Heart left ventricle (tissue), 16 donors: ENCODE measurements at regions of chr9 and their contacts with region 1.

Region 1: DNA sequence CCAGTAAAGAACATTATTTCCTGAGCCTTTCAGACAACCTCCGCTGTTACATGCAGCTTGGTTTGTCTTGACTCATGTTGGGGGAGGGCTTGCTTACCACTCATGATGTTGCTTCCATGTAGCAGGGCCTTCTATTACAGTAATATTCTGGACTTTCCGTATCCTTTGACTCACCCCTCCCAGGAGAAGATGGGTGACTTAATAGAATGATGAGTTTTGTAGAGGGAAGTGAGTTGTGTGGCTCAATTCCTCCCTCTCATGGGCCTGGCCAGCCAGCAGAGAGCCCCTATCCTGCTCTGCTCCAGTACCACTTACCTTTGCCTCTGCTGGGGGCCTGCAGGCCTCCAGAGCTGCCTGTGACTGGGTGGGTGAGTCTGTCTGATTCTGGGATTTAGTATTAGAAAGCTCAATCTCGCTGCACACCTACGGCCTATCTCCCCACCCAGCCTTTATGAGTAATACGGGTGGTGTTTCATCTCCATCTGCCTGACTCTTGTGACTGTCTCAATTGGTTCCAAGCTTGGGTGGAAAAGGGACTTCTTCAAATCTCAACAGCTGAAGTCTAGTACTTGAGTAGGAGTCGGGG is 52.6 kb upstream of the KLF9 start:
- DNase-seq: no peak
- ATAC-seq: peak in 2 of 4 donors; percentile 31 to 40
- H3K4me3 ChIP-seq: no peak overlapping the region
- H3K27ac ChIP-seq: peak overlapping the region in 4 of 12 donors; percentile 1 to 78 (median 70)
- H3K4me1 ChIP-seq: peaks cover 15 to 59% (median 36%) of the 10 kb centered on the region in 12 donors
- H3K27me3 ChIP-seq: no peaks in the 10 kb centered on the region
- CTCF ChIP-seq: no peak
- POLR2A ChIP-seq: no peak

Region 2: GRCh38 chr9:70438341-70438928 is 28.6 kb before region 1 on chr9:
- intact Hi-C with region 1: loop called in 2 of 10 experiments (anchors 2 to 5 kb)
- DNase-seq: peak; percentile 61 to 86 (median 63)
- ATAC-seq: peak; percentile 86 to 97 (median 92)
- H3K4me3 ChIP-seq: no peak overlapping the region
- H3K27ac ChIP-seq: peak overlapping the region; percentile 21 to 78 (median 71)
- H3K4me1 ChIP-seq: peaks cover 0 to 47% (median 25%) of the 10 kb centered on the region in 12 donors
- H3K27me3 ChIP-seq: no peaks in the 10 kb centered on the region
- CTCF ChIP-seq: no peak
- POLR2A ChIP-seq: no peak

Region 3: DNA sequence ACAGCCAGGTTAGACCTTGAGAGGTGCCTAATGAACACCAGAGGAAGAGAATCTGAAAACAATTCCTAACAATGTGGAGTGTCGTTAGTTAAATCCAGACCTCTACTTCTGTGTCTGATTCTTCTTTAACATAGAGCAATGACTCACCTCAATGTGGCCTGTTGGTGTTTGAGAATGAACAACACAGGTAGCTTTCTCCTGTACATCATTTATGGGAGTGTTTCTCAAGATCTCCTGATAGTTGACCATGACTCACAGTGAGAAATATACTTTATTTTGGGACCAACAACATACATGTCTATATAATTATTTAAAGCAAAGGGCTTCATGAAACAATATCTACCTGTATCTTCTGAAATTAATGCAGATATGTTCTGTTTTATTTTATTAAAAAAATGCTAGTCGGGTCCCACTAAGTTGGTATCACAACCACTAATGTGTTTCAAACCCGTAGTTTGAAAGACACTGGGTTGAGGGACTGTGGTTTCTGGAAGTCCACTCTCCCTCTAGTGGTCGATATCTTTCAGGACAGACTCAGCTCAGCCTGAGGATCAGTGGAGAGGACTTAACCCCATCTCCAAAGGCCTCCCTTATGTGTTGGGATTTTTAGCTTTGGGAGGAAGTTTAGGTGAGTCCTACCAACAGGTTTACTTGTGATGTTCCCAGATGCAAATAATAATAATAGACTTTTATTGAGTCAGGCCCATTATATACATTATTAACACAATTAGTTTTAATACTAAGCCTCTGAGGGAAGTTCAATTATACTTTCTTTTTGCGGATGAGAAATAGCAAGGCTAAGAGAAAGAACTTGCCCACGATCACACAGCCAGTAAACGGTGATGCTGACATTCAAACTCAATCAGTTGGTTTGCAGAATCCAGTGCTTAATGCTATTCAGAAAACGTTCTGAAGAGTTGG is 17.4 kb after region 1 on chr9:
- intact Hi-C with region 1: no loop called
- DNase-seq: peak in 2 of 5 donors; percentile 48 to 56
- ATAC-seq: peak; percentile 45 to 74 (median 69)
- H3K4me3 ChIP-seq: no peak overlapping the region
- H3K27ac ChIP-seq: peak overlapping the region; percentile 14 to 95 (median 72)
- H3K4me1 ChIP-seq: peaks cover 30 to 83% (median 62%) of the 10 kb centered on the region in 12 donors
- H3K27me3 ChIP-seq: no peaks in the 10 kb centered on the region
- CTCF ChIP-seq: peak; percentile 59 to 88 (median 79)
- POLR2A ChIP-seq: no peak